Panc1 (cell line): ENCODE measurements at regions of chr6 and their contacts with region 1.

Region 1: GRCh38 chr6:44085220-44085619 is 42.0 kb downstream of the MRPL14 start:
- DNase-seq: no peak
- ATAC-seq: no peak
- H3K4me3 ChIP-seq: no peak overlapping the region
- H3K27ac ChIP-seq: no peak overlapping the region
- H3K4me1 ChIP-seq: no peaks in the 10 kb centered on the region
- H3K27me3 ChIP-seq: no peaks in the 10 kb centered on the region
- CTCF ChIP-seq: no peak

Region 2: GRCh38 chr6:43657221-43657802 is 427.9 kb before region 1 on chr6:
- CTCF ChIA-PET with region 1: no interaction called
- POLR2A ChIA-PET with region 1: interaction called, 10 read pairs
- in situ Hi-C with region 1: no loop called
- intact Hi-C with region 1: no loop called
- DNase-seq: no peak
- ATAC-seq: no peak
- H3K4me3 ChIP-seq: no peak overlapping the region
- H3K27ac ChIP-seq: no peak overlapping the region
- H3K4me1 ChIP-seq: no peaks in the 10 kb centered on the region
- H3K27me3 ChIP-seq: no peaks in the 10 kb centered on the region
- CTCF ChIP-seq: no peak

Region 3: GRCh38 chr6:44353336-44353735 is 268.1 kb after region 1 on chr6:
- CTCF ChIA-PET with region 1: no interaction called
- POLR2A ChIA-PET with region 1: no interaction called
- in situ Hi-C with region 1: no loop called
- intact Hi-C with region 1: no loop called
- DNase-seq: no peak
- ATAC-seq: no peak
- H3K4me3 ChIP-seq: no peak overlapping the region
- H3K27ac ChIP-seq: no peak overlapping the region
- H3K4me1 ChIP-seq: no peaks in the 10 kb centered on the region
- H3K27me3 ChIP-seq: peaks cover 3% of the 10 kb centered on the region; the same call in 1 of the 2 replicates
- CTCF ChIP-seq: no peak